Activated CD4-positive, alpha-beta T cell treated with anti-CD3 and anti-CD28 coated beads for 36 hours (primary cell): ENCODE measurements at regions of chr19 and their contacts with region 1.

Region 1: DNA sequence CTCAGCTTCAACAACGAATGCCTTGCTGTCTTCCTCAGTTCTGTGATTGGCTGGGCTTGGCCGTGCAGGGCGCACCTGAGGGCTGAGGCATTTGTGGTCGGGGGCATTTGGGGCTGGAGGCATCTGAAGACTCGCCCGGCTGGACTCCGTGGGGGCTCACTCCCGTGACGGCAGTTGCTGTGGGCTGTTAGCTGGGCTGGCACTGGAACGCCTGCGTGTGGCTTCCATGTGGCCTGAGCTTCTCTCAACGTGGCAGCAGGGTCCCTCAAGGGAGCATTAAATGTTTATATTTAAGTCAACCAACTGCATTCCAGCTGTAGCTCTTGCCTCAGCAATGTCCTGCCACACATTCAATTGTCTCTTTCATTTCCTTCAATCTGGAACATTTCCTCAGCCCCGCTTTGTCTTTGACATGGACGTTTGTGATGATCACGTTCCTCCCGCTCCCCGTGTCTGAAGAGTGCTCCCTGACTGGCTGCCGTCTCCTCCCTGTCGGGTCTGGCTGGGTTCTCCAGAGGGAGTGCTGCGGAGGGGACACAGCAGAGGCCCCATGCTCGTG is 21.0 kb downstream of the CCDC8 start:
- DNase-seq: no peak
- ATAC-seq: no peak
- H3K4me3 Mint-ChIP-seq: no peak overlapping the region
- H3K27ac Mint-ChIP-seq: no peak overlapping the region
- H3K4me1 Mint-ChIP-seq: peaks cover 4% of the 10 kb centered on the region
- H3K27me3 Mint-ChIP-seq: no peaks in the 10 kb centered on the region

Region 2: DNA sequence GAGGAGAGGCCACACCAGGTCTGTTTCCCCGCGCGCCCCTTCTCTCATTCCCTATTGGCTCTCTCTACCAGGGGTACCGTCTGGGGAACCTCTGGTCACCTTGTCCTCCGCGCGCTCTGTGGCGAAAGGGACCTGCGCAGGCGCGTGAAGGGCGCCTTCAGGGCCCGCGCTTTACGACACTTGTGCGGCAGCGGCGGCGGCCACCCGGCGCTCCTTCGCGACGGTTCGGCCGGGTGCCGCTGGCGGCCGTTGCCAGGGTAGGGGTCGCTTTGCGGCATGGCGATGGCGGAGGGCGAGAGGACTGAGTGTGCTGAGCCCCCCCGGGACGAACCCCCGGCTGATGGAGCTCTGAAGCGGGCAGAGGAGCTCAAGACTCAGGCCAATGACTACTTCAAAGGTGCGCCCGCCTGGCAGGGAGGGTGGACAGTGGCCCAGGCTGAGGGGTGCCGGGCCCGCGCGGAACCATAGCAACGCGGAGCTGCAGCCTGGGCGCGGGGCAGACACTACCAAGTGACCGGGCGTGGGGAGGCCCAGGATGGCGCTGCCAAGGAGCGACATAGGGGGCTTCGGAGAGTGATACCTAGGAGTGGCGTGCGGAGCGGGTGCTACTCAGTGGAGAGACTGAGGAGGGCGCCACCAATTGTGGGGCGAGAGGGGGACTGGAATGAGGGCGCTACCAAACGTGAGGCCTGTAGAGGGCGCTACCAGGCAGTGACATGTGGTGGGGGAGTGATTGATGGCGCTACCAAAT is 45.3 kb before region 1 on chr19 and contains the start of gene PPP5C:
- CTCF ChIA-PET with region 1: no interaction called
- POLR2A ChIA-PET with region 1: no interaction called
- intact Hi-C with region 1: loop called in 1 of 2 experiments (anchors 2 kb)
- DNase-seq: peak; percentile 94
- ATAC-seq: peak; percentile 74
- H3K4me3 Mint-ChIP-seq: peak within 1 kb of the TSS; percentile 90
- H3K27ac Mint-ChIP-seq: peak within 1 kb of the TSS; percentile 91
- H3K4me1 Mint-ChIP-seq: peaks cover 41% of the 10 kb centered on the region
- H3K27me3 Mint-ChIP-seq: no peaks in the 10 kb centered on the region
- total RNA-seq, gene PPP5C: 100.0 to 129 TPM

Region 3: GRCh38 chr19:46404055-46404752 is 11.9 kb after region 1 on chr19:
- CTCF ChIA-PET with region 1: interaction called, 10 read pairs
- POLR2A ChIA-PET with region 1: no interaction called
- intact Hi-C with region 1: no loop called
- DNase-seq: no peak
- ATAC-seq: no peak
- H3K4me3 Mint-ChIP-seq: no peak overlapping the region
- H3K27ac Mint-ChIP-seq: no peak overlapping the region
- H3K4me1 Mint-ChIP-seq: peaks cover 17% of the 10 kb centered on the region
- H3K27me3 Mint-ChIP-seq: peaks cover 60% of the 10 kb centered on the region

Region 4: GRCh38 chr19:46482631-46483030 is 90.3 kb after region 1 on chr19:
- CTCF ChIA-PET with region 1: interaction called, 19 read pairs
- POLR2A ChIA-PET with region 1: no interaction called
- intact Hi-C with region 1: loop called in 1 of 2 experiments (anchors 2 kb)
- DNase-seq: no peak
- ATAC-seq: no peak
- H3K4me3 Mint-ChIP-seq: no peak overlapping the region
- H3K27ac Mint-ChIP-seq: no peak overlapping the region
- H3K4me1 Mint-ChIP-seq: peaks cover 8% of the 10 kb centered on the region
- H3K27me3 Mint-ChIP-seq: peaks cover 44% of the 10 kb centered on the region

Region 5: GRCh38 chr19:46487802-46488445 is 95.6 kb after region 1 on chr19:
- CTCF ChIA-PET with region 1: interaction called, 19 read pairs
- POLR2A ChIA-PET with region 1: no interaction called
- intact Hi-C with region 1: loop called (anchors 1 to 2 kb)
- DNase-seq: peak; percentile 86
- ATAC-seq: peak; percentile 68
- H3K4me3 Mint-ChIP-seq: no peak overlapping the region
- H3K27ac Mint-ChIP-seq: no peak overlapping the region
- H3K4me1 Mint-ChIP-seq: peaks cover 11% of the 10 kb centered on the region
- H3K27me3 Mint-ChIP-seq: peaks cover 61% of the 10 kb centered on the region

Region 6: DNA sequence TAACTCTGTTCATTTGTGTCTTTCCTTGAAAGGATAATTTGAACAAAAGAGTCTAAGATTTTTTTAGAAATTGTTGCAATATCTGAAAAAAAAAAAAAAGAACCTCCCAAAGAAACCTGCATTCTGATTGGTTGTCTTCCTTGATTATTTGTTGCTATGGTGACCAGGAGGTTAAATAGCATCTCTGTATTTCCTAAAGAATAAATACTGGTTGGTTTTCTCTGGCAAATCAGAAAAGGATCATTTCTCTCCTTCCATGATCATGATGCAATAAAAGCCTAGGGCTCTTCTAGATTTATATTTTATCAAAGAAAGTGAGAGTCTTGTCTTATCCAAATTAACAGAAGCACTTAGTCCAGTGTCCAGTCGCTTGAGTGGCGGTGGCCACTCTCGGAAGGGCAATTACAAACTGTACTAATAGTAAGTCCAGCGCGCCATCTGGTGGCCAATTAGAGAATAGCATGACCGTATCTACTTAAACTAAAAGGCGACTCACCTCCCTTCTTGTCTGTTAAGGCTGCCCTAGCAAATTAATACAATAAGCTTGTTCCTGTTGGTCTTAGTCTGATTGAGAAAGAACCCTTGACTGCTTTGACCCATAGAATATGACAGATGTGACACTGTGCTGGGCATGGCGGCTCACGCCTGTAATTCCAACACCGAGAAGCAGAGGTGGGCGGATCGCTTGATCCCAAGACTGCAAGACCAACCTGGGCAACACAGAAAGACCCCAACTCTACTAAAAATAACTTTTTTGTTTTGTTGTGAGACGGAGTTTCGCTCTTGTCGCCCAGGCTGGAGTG is 150.3 kb after region 1 on chr19:
- CTCF ChIA-PET with region 1: interaction called, 5 read pairs
- POLR2A ChIA-PET with region 1: no interaction called
- intact Hi-C with region 1: loop called (anchors 1 kb)
- DNase-seq: peak; percentile 90
- ATAC-seq: peak; percentile 64
- H3K4me3 Mint-ChIP-seq: no peak overlapping the region
- H3K27ac Mint-ChIP-seq: no peak overlapping the region
- H3K4me1 Mint-ChIP-seq: peaks cover 9% of the 10 kb centered on the region
- H3K27me3 Mint-ChIP-seq: no peaks in the 10 kb centered on the region